ENCODE measurements at regions of chr16 and their contacts with region 1.

Region 1: GRCh38 chr16:54929090-54930004 is 1.3 kb upstream of the IRX5 start:
- H3K4me3 Mint-ChIP-seq: peak overlapping the region; percentile 79
- H3K27ac Mint-ChIP-seq: peak overlapping the region; percentile 83
- H3K4me1 Mint-ChIP-seq: peaks cover 41% of the 10 kb centered on the region
- H3K27me3 Mint-ChIP-seq: peaks cover 72% of the 10 kb centered on the region

Region 2: DNA sequence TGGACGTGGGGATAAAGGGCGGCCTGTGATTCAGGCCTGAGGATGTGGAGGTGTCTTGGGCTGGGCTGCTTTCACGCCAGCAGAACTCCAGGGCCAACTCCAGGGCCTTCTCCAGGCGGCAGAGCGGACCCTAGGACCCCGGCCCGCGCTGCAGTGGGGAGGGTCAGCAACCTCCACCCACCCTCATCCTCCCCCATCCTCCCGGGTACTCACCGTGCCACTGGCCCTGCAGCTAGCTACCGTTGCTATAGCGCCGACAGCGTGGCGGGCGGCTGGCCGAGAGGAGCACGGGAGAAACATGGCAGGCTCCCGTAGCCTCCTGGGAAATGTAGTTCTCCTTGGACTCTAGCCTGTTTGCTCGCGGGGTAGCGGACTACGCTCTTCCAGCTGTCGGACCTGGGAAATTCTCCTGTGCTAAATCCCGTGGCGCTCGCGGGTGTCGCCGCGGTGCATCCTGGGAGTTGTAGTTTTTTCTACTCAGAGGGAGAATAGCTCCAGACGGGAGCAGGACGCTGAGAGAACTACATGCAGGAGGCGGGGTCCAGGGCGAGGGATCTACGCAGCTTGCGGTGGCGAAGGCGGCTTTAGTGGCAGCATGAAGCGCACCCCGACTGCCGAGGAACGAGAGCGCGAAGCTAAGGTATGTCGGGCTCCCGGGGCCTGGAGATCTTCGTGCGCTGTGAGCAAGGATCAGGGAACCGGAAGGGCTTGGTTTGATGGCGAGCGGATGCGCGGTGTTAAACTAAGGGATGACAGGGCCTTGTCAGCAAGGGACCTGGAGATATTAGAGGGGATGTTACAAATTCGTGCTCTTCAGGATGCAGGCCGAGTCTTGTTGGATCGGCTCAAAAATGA is 1225.5 kb before region 1 on chr16 and contains the starts of genes FTO and RPGRIP1L:
- intact Hi-C with region 1: loop called (anchors 2 kb)
- H3K4me3 Mint-ChIP-seq: peak within 1 kb of the TSS; percentile 88
- H3K27ac Mint-ChIP-seq: peak within 1 kb of the TSS; percentile 83
- H3K4me1 Mint-ChIP-seq: peaks cover 31% of the 10 kb centered on the region
- H3K27me3 Mint-ChIP-seq: no peaks in the 10 kb centered on the region

Region 3: GRCh38 chr16:53865494-53865863 is 1063.9 kb before region 1 on chr16:
- intact Hi-C with region 1: loop called (anchors 5 kb)
- H3K4me3 Mint-ChIP-seq: peak overlapping the region; percentile 55
- H3K27ac Mint-ChIP-seq: peak overlapping the region; percentile 85
- H3K4me1 Mint-ChIP-seq: peaks cover 43% of the 10 kb centered on the region
- H3K27me3 Mint-ChIP-seq: no peaks in the 10 kb centered on the region

Region 4: GRCh38 chr16:54286090-54286993 is 643.0 kb before region 1 on chr16 and contains the start of gene IRX3:
- intact Hi-C with region 1: loop called (anchors 10 kb)
- H3K4me3 Mint-ChIP-seq: peak within 1 kb of the TSS; percentile 62
- H3K27ac Mint-ChIP-seq: no peak within 1 kb of the TSS
- H3K4me1 Mint-ChIP-seq: peaks cover 43% of the 10 kb centered on the region
- H3K27me3 Mint-ChIP-seq: peaks cover 88% of the 10 kb centered on the region